ENCODE measurements at regions of chr11 and their contacts with region 1.

Region 1: GRCh38 chr11:126440792-126441514 is 85.5 kb downstream of the ST3GAL4 start:
- DNase-seq: peak; percentile 55
- ATAC-seq: peak; percentile 88
- H3K4me3 ChIP-seq: no peak overlapping the region
- H3K27ac ChIP-seq: no peak overlapping the region
- H3K4me1 ChIP-seq: peaks cover 6% of the 10 kb centered on the region; the same call in 1 of the 2 replicates
- H3K27me3 ChIP-seq: peaks cover 0 to 25% of the 10 kb centered on the region in 2 experiments; a peak in 2 of 5 replicates
- CTCF ChIP-seq: peak; percentile 95
- EP300 ChIP-seq: no peak
- POLR2A ChIP-seq: no peak
- RAD21 ChIP-seq: peak; percentile 94

Region 2: GRCh38 chr11:126480410-126481302 is 39.7 kb after region 1 on chr11:
- CTCF ChIA-PET with region 1: interaction called, 19 read pairs
- POLR2A ChIA-PET with region 1: interaction called, 3 read pairs
- in situ Hi-C with region 1: no loop called
- intact Hi-C with region 1: loop called (anchors 1 kb)
- DNase-seq: peak; percentile 74
- ATAC-seq: peak; percentile 82
- H3K4me3 ChIP-seq: peak overlapping the region in 2 of 3 experiments; percentile 27 to 53; a peak in 2 of 6 replicates
- H3K27ac ChIP-seq: no peak overlapping the region
- H3K4me1 ChIP-seq: peaks cover 8% of the 10 kb centered on the region
- H3K27me3 ChIP-seq: peaks cover 4 to 44% of the 10 kb centered on the region in 2 experiments; a peak in 4 of 5 replicates
- CTCF ChIP-seq: peak; percentile 90
- EP300 ChIP-seq: no peak
- POLR2A ChIP-seq: no peak
- RAD21 ChIP-seq: peak; percentile 58

Region 3: GRCh38 chr11:126607374-126607773 is 166.4 kb after region 1 on chr11:
- CTCF ChIA-PET with region 1: no interaction called
- POLR2A ChIA-PET with region 1: no interaction called
- in situ Hi-C with region 1: loop called (anchors 10 kb)
- intact Hi-C with region 1: loop called (anchors 10 kb)
- DNase-seq: peak; percentile 33
- ATAC-seq: peak; percentile 98
- H3K4me3 ChIP-seq: no peak overlapping the region
- H3K27ac ChIP-seq: no peak overlapping the region
- H3K4me1 ChIP-seq: peaks cover 3% of the 10 kb centered on the region
- H3K27me3 ChIP-seq: peaks cover 7 to 34% of the 10 kb centered on the region in 2 experiments; a peak in 3 of 5 replicates
- CTCF ChIP-seq: peak; percentile 86
- EP300 ChIP-seq: no peak
- POLR2A ChIP-seq: no peak
- RAD21 ChIP-seq: peak; percentile 73

Region 4: GRCh38 chr11:126834149-126834548 is 393.2 kb after region 1 on chr11:
- CTCF ChIA-PET with region 1: no interaction called
- POLR2A ChIA-PET with region 1: no interaction called
- in situ Hi-C with region 1: no loop called
- intact Hi-C with region 1: no loop called
- DNase-seq: no peak
- ATAC-seq: no peak
- H3K4me3 ChIP-seq: no peak overlapping the region
- H3K27ac ChIP-seq: no peak overlapping the region
- H3K4me1 ChIP-seq: no peaks in the 10 kb centered on the region
- H3K27me3 ChIP-seq: peaks cover 0 to 15% of the 10 kb centered on the region in 2 experiments; a peak in 2 of 5 replicates
- CTCF ChIP-seq: no peak
- EP300 ChIP-seq: no peak
- POLR2A ChIP-seq: no peak
- RAD21 ChIP-seq: no peak

Region 5: DNA sequence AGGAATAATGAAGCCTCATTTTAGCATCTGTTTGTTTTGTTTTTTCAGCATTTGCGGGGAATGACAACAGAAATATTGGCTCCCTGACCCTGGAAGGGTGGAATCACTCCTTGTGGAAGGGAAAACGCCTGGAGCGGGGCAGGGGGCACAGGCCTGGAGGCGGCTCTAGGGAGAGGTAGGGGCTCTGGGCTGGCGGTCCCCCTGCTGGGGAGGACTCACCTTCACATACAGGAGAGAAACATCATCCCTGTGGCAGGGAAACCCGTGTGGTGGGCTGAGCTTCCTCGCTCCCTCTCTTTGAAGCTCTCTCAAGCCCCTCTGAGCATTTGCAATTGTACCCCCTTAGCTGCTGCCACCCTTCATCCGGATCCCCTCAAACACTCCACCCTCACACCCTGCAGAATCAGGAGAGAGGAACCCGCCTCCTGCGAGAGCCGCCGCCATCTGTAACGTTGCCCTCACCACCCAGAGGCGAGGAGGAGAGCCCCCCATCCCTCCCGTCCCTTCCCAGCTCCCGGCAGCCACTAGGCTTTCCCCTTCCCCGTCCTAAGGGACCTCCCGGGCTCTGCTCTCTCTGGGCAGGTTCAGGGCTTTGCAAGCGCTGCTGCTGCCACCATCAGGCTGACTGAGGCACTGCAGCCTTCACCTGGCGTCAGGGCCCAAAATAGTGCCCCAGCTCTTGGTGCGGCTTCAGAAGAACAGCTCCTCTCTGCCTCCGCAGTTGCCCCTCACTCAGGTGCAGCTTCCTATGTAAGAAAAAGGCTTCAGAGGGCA is 549.2 kb after region 1 on chr11:
- CTCF ChIA-PET with region 1: no interaction called
- POLR2A ChIA-PET with region 1: no interaction called
- in situ Hi-C with region 1: loop called (anchors 10 kb)
- intact Hi-C with region 1: no loop called
- DNase-seq: peak; percentile 38
- ATAC-seq: peak; percentile 97
- H3K4me3 ChIP-seq: no peak overlapping the region
- H3K27ac ChIP-seq: no peak overlapping the region
- H3K4me1 ChIP-seq: no peaks in the 10 kb centered on the region
- H3K27me3 ChIP-seq: peaks cover 3 to 22% of the 10 kb centered on the region in 2 experiments; a peak in 4 of 5 replicates
- CTCF ChIP-seq: peak; percentile 94
- EP300 ChIP-seq: no peak
- POLR2A ChIP-seq: no peak
- RAD21 ChIP-seq: peak; percentile 81

Region 6: GRCh38 chr11:127345819-127346459 is 905.0 kb after region 1 on chr11:
- CTCF ChIA-PET with region 1: interaction called, 17 read pairs
- POLR2A ChIA-PET with region 1: no interaction called
- in situ Hi-C with region 1: loop called (anchors 10 kb)
- intact Hi-C with region 1: no loop called
- DNase-seq: peak; percentile 13
- ATAC-seq: 0 out of 3 replicates have a peak, but pooled peaks have one; percentile 44
- H3K4me3 ChIP-seq: no peak overlapping the region
- H3K27ac ChIP-seq: no peak overlapping the region
- H3K4me1 ChIP-seq: no peaks in the 10 kb centered on the region
- H3K27me3 ChIP-seq: no peaks in the 10 kb centered on the region
- CTCF ChIP-seq: peak; percentile 62
- EP300 ChIP-seq: no peak
- POLR2A ChIP-seq: no peak
- RAD21 ChIP-seq: no peak

Region 7: GRCh38 chr11:128157423-128158298 is 1716.7 kb after region 1 on chr11:
- CTCF ChIA-PET with region 1: no interaction called
- POLR2A ChIA-PET with region 1: no interaction called
- in situ Hi-C with region 1: loop called (anchors 25 kb)
- intact Hi-C with region 1: no loop called
- DNase-seq: peak; percentile 44
- ATAC-seq: peak; percentile 83
- H3K4me3 ChIP-seq: no peak overlapping the region
- H3K27ac ChIP-seq: no peak overlapping the region
- H3K4me1 ChIP-seq: no peaks in the 10 kb centered on the region
- H3K27me3 ChIP-seq: no peaks in the 10 kb centered on the region
- CTCF ChIP-seq: peak; percentile 41
- EP300 ChIP-seq: no peak
- POLR2A ChIP-seq: no peak
- RAD21 ChIP-seq: 0 out of 2 replicates have a peak, but pooled peaks have one; percentile 24

Region 8: DNA sequence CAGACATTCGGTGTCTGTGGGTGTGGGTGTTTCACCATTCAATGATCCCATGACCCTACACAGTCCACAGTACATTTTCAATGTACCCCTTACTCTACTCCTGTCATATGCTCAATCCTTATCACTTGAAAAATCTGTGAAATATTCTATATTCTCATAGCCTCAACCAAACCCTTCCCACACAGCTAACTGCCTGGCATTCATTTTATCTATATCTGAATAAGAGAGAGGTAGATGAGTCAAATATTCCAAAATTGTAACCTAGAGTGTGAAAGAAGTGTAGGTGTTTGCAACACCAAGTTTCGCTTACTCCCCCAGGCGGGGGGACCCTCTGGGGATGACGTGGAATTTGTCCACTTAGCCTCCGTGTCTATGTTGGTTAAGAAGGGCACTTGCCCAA is 1791.6 kb after region 1 on chr11:
- CTCF ChIA-PET with region 1: no interaction called
- POLR2A ChIA-PET with region 1: no interaction called
- in situ Hi-C with region 1: no loop called
- intact Hi-C with region 1: no loop called
- DNase-seq: no peak
- ATAC-seq: no peak
- H3K4me3 ChIP-seq: no peak overlapping the region
- H3K27ac ChIP-seq: no peak overlapping the region
- H3K4me1 ChIP-seq: no peaks in the 10 kb centered on the region
- H3K27me3 ChIP-seq: no peaks in the 10 kb centered on the region
- CTCF ChIP-seq: no peak
- EP300 ChIP-seq: no peak
- POLR2A ChIP-seq: no peak
- RAD21 ChIP-seq: no peak